Naive thymus-derived CD4-positive, alpha-beta T cell (primary cell): ENCODE measurements at regions of chr14 and their contacts with region 1.

Region 1: GRCh38 chr14:21383848-21384493 is at the start of gene SUPT16H:
- DNase-seq: peak; percentile 78 to 91 (median 86)
- ATAC-seq: peak; percentile 97
- H3K4me3 ChIP-seq: peak within 1 kb of the TSS; percentile 98
- H3K4me3 Mint-ChIP-seq: peak within 1 kb of the TSS; percentile 92 to 99 (median 97)
- H3K27ac ChIP-seq: peak within 1 kb of the TSS; percentile 87
- H3K27ac Mint-ChIP-seq: peak within 1 kb of the TSS; percentile 97 to 100 (median 99)
- H3K4me1 ChIP-seq: peaks cover 3 to 11% of the 10 kb centered on the region in 2 donors
- H3K4me1 Mint-ChIP-seq: peaks cover 26 to 52% (median 45%) of the 10 kb centered on the region in 7 donors
- H3K27me3 ChIP-seq: no peaks in the 10 kb centered on the region
- H3K27me3 Mint-ChIP-seq: no peaks in the 10 kb centered on the region
- total RNA-seq, gene SUPT16H: 46.1 to 104 (median 78.6) TPM

Region 2: GRCh38 chr14:21229821-21230220 is 154.2 kb before region 1 on chr14:
- CTCF ChIA-PET with region 1: no interaction called
- POLR2A ChIA-PET with region 1: no interaction called
- intact Hi-C with region 1: loop called in 1 of 2 experiments (anchors 5 kb)
- DNase-seq: peak in 7 of 9 donors; percentile 52 to 76 (median 65)
- ATAC-seq: peak; percentile 93
- H3K4me3 ChIP-seq: no peak overlapping the region
- H3K4me3 Mint-ChIP-seq: peak overlapping the region; percentile 27 to 76 (median 66)
- H3K27ac ChIP-seq: peak overlapping the region; percentile 68
- H3K27ac Mint-ChIP-seq: peak overlapping the region; percentile 82 to 94 (median 89)
- H3K4me1 ChIP-seq: peaks cover 48 to 73% of the 10 kb centered on the region in 2 donors
- H3K4me1 Mint-ChIP-seq: peaks cover 44 to 84% (median 74%) of the 10 kb centered on the region in 7 donors
- H3K27me3 ChIP-seq: no peaks in the 10 kb centered on the region
- H3K27me3 Mint-ChIP-seq: no peaks in the 10 kb centered on the region

Region 3: DNA sequence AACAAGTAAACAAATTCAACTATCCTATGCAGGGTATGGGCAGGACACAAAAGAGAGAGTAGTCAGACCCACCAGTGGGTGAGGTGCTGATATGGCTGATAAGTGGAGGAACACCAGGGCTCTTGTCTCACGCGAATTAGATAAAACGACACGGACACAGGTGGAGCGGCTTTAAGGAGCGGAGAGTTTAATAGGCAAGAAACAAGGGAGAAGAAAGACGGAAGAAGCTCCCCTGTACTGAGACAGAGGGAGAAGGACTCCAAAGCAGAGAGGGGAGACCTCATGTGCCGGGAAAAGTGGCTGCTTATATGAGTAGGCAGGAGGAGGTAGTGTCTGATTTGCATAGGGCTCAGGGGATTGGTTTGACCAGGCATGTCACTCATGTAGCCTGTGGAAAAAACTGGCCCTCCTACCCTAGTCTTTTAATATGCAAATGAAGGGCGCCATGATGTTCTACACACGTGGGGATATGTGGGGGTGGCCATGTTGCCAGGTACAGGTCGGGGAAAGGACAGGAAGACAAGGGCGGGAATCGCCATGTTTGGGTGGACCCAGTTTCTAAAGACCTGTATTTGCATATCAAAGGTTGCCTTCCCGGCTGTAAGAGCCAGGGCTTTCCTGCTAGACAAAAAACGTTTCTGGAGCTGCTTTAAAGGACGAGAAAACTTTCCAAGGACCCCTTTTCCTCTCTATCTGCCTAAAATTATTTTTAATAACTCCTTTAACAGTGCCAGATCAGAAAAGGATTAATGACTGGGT is 75.3 kb before region 1 on chr14:
- CTCF ChIA-PET with region 1: no interaction called
- POLR2A ChIA-PET with region 1: interaction called, 4 read pairs
- intact Hi-C with region 1: loop called in 1 of 2 experiments (anchors 2 kb)
- DNase-seq: peak; percentile 20 to 82 (median 78)
- ATAC-seq: peak; percentile 91
- H3K4me3 ChIP-seq: peak overlapping the region; percentile 63
- H3K4me3 Mint-ChIP-seq: peak overlapping the region; percentile 68 to 88 (median 83)
- H3K27ac ChIP-seq: peak overlapping the region; percentile 64
- H3K27ac Mint-ChIP-seq: peak overlapping the region; percentile 63 to 95 (median 82)
- H3K4me1 ChIP-seq: peaks cover 5 to 10% of the 10 kb centered on the region in 2 donors
- H3K4me1 Mint-ChIP-seq: peaks cover 7 to 24% (median 18%) of the 10 kb centered on the region in 7 donors
- H3K27me3 ChIP-seq: no peaks in the 10 kb centered on the region
- H3K27me3 Mint-ChIP-seq: peaks cover 0 to 17% (median 0%) of the 10 kb centered on the region in 5 donors

Region 4: DNA sequence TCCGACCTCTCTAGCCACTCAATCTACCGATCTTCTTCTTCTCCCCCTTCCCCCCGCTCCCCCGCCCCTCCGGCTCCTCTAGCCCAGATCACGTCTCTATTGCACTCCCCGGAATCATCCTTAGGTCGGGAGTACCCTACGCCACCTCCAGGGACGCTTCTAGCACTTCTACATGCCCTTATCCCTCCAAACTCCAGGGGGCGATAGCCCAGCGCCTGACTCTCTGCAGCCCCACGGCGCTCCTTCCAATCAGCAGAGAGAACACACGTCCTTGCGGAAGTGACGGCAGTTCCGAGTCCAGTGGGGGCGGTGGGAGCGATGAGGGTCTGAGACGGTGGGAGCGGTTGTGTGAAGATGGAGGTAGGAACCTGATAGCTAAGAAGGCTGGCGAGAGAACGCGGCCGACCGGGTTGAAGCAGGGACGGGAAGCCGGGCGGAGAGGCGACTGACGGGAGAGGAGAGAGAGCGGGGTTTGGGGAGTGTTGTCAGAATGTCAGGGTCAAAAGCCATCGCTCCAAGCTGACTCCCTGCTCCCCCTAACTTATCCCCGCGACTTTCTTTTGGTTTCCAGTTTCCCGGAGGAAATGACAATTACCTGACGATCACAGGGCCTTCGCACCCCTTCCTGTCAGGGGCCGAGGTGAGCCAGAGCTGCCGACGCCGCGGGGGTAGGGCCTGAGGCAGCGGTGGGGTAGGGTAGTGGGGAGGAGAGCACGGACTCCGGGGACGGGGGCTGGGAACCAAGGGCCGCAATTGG is 93.1 kb after region 1 on chr14 and contains the starts of genes RAB2B and TOX4:
- CTCF ChIA-PET with region 1: no interaction called
- POLR2A ChIA-PET with region 1: interaction called, 3 read pairs
- intact Hi-C with region 1: loop called (anchors 1 kb)
- DNase-seq: peak; percentile 83 to 98 (median 97)
- ATAC-seq: peak; percentile 99
- H3K4me3 ChIP-seq: peak within 1 kb of the TSS; percentile 99
- H3K4me3 Mint-ChIP-seq: peak within 1 kb of the TSS; percentile 96 to 100 (median 99)
- H3K27ac ChIP-seq: peak within 1 kb of the TSS; percentile 88
- H3K27ac Mint-ChIP-seq: peak within 1 kb of the TSS; percentile 93 to 100 (median 98)
- H3K4me1 ChIP-seq: peaks cover 21 to 22% of the 10 kb centered on the region in 2 donors
- H3K4me1 Mint-ChIP-seq: peaks cover 18 to 74% (median 58%) of the 10 kb centered on the region in 7 donors
- H3K27me3 ChIP-seq: no peaks in the 10 kb centered on the region
- H3K27me3 Mint-ChIP-seq: no peaks in the 10 kb centered on the region
- total RNA-seq, gene RAB2B: 26.6 to 32.8 (median 30.5) TPM
- total RNA-seq, gene TOX4: 78.5 to 116 (median 86.5) TPM